Gastrocnemius medialis (tissue), 4 donors: ENCODE measurements at regions of chr6 and their contacts with region 1.

Region 1: DNA sequence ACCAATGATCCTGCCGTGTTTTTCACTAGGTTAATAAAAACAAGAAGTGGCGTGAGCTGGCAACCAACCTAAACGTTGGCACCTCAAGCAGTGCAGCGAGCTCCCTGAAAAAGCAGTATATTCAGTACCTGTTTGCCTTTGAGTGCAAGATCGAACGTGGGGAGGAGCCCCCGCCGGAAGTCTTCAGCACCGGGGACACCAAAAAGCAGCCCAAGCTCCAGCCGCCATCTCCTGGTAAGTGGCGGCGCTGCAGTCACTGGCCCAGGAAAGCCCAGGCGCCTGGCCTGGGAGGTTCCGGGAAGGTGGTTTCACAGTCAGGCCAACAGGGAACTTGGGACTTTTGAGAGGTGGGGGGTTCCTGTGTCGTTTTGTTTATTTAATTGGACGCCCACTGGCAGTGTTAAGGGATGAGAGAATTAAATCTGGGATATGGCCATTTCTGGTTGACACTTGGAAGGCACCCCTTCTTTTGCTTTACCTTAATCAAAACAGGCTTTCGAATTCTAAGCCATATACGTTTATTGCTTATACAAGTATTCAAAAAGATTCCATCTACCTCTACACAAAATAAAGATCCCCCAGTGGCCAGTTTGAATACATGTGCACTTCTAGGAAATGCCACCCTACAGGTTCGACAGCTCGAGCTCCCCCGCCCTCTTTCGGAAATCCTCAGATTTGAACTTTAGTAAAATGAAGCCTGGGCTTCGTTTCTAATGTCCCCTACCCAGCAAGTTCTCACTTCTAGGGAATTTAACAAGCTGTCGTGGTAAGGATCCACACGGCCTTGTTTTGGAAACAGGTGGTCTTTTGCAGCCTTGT is 138.9 kb downstream of the TMEM242 start:
- DNase-seq: peak; percentile 41 to 65
- ATAC-seq: peak; percentile 22 to 40
- H3K4me3 ChIP-seq: no peak overlapping the region
- H3K27ac ChIP-seq: peak overlapping the region in 3 of 4 donors; percentile 9 to 46 (median 24)
- H3K4me1 ChIP-seq: peaks cover 26 to 27% of the 10 kb centered on the region in 2 donors
- H3K27me3 ChIP-seq: no peaks in the 10 kb centered on the region
- CTCF ChIP-seq: peak; percentile 83 to 92 (median 90)
- POLR2A ChIP-seq: no peak

Region 2: DNA sequence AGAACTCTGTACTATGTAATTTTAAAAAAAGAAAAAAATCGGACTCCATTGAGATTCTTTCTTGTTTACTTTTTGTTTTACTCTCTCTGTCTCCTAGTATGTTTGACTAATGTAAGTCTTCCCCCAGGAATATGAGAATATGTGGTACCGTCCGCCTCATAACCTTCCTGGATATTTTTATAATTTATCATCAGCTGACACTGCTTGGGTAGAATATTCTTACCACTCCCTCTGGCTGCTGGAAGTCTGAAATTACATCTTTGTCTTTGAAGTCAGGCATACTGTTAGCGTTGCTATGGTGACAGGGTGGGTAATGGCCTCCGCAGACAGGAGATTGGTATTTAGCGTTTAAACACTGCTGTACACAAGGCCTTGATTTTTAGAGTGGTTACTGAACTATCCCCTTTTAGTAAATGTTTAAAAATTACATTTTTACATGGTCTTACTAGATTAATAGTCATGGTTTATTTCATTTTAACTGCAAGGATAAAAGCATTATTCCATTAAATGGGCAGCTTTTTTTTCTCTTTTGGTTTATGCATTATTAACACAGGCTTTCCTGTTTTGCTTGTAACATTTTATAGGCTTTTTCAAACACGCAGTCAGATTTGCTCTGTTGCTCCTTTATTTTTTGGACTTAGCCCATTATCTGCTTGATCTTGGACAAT is 230.8 kb before region 1 on chr6:
- in situ Hi-C with region 1: loop called in 1 of 4 experiments (anchors 10 kb)
- intact Hi-C with region 1: loop called (anchors 10 kb)
- DNase-seq: peak; percentile 62 to 76
- ATAC-seq: peak; percentile 81 to 84
- H3K4me3 ChIP-seq: peak overlapping the region in 3 of 4 donors; percentile 1 to 19 (median 7)
- H3K27ac ChIP-seq: peak overlapping the region; percentile 81 to 92 (median 88)
- H3K4me1 ChIP-seq: peaks cover 90 to 92% of the 10 kb centered on the region in 2 donors
- H3K27me3 ChIP-seq: no peaks in the 10 kb centered on the region
- CTCF ChIP-seq: peak in 4 of 5 experiments; percentile 17 to 42 (median 30)
- POLR2A ChIP-seq: peak in 1 of 2 donors; percentile 75

Region 3: DNA sequence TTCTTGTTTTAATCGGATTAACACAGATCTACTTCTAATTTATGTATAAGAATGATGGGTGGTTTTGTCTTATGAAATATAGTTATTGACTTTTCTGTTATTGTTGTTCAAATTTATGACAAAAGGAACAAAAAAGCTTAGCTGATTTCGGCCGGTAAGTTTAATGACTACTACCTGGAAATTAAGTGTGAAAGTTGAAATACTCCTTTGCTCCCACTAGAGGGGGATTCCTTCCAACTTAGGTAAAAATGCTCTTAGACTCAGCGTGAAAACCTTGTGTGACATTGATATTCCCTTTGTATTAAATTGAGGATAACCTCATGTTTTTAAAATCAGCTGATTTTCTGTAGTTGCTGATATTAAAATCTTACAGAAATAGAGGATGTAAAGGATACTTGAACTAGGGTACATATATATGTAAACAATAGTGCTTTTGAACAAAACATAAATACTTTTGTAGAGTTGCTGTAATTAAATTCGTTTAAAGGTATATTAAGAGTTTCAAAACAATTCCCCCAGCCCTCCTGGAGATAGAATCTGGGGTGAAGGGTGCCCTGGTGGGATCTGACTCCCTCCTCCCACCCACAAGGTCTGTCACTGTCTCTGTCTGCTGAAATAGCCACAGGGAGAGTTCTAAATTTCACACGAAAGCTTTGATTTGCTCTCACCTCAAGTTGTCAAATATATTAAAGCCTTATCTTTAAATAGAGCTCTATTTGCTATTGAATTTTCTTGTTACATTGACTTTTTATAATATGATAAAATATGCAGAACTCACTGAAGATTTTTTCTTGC is 149.8 kb before region 1 on chr6:
- in situ Hi-C with region 1: loop called in 3 of 4 experiments (anchors 10 to 25 kb)
- intact Hi-C with region 1: loop called (anchors 5 kb)
- DNase-seq: no peak
- ATAC-seq: peak in 1 of 2 donors; percentile 42
- H3K4me3 ChIP-seq: no peak overlapping the region
- H3K27ac ChIP-seq: peak overlapping the region in 2 of 4 donors; percentile 4 to 8
- H3K4me1 ChIP-seq: peaks cover 41 to 45% of the 10 kb centered on the region in 2 donors
- H3K27me3 ChIP-seq: no peaks in the 10 kb centered on the region
- CTCF ChIP-seq: peak; percentile 22 to 55 (median 53)
- POLR2A ChIP-seq: no peak

Region 4: DNA sequence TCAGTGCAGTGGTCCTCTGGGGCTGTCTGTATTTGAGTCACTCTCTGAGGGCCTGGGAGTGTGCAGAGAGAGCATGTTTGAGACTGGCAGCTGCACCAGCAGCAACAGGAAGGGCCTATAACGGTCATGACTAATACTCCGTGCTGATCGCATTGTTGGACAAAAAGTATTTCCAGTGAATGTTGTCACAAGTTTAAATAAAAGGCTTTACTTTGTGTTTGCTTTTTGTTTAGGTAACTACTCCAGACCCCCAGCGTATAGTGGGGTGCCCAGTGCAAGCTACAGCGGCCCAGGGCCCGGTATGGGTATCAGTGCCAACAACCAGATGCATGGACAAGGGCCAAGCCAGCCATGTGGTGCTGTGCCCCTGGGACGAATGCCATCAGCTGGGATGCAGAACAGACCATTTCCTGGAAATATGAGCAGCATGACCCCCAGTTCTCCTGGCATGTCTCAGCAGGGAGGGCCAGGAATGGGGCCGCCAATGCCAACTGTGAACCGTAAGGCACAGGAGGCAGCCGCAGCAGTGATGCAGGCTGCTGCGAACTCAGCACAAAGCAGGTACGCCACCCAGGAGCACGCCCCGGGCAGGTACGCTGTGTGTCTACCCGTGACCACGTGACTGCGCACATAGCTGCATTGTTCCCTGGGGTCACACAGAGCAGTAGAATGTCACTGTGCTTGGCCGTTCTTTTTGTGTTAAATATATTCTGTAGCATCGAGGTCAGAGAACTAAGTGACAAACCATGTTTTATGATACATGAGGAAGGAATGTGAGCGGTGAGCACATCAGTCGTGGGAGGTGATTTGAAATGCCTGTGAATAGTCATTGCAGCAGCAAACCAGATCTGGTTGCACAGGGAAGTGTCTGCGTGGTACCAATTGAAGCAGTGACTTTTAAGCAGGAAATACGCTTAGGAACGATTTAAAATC is 35.8 kb before region 1 on chr6:
- in situ Hi-C with region 1: no loop called
- intact Hi-C with region 1: loop called (anchors 5 kb)
- DNase-seq: peak in 1 of 2 donors; percentile 69
- ATAC-seq: peak; percentile 82 to 91
- H3K4me3 ChIP-seq: no peak overlapping the region
- H3K27ac ChIP-seq: peak overlapping the region; percentile 51 to 81 (median 59)
- H3K4me1 ChIP-seq: peaks cover 15 to 31% of the 10 kb centered on the region in 2 donors
- H3K27me3 ChIP-seq: no peaks in the 10 kb centered on the region
- CTCF ChIP-seq: no peak
- POLR2A ChIP-seq: no peak